H1 (cell line): ENCODE measurements at regions of chr17 and their contacts with region 1.

Region 1: DNA sequence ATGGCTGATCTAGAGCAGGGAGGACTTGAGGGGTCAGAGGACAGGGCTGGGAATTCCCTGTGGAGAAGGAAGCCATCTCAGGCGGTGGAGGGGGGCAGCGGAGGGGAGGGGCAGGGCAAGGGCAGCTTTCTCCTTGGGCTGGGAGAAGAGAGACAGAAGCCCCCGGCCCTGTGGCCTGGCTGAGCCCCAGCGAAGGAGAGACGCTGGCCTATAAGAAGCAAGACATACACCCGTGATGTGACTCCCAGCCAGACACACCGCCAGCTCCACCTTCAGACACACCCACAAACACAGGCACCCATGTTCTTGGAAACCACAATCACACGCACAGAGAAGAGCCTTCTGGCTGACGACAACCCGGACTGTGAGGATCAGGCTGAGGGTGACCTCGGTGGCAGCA is 10.0 kb downstream of the TRPV3 start:
- DNase-seq: no peak
- H3K4me3 ChIP-seq: no peak overlapping the region
- H3K27ac ChIP-seq: no peak overlapping the region
- H3K4me1 ChIP-seq: peaks cover 0 to 2% (median 0%) of the 10 kb centered on the region in 4 experiments; a peak in 1 of 7 replicates
- H3K27me3 ChIP-seq: no peaks in the 10 kb centered on the region
- CTCF ChIP-seq: no peak
- EP300 ChIP-seq: no peak
- POLR2A ChIP-seq: no peak
- RAD21 ChIP-seq: no peak

Region 2: DNA sequence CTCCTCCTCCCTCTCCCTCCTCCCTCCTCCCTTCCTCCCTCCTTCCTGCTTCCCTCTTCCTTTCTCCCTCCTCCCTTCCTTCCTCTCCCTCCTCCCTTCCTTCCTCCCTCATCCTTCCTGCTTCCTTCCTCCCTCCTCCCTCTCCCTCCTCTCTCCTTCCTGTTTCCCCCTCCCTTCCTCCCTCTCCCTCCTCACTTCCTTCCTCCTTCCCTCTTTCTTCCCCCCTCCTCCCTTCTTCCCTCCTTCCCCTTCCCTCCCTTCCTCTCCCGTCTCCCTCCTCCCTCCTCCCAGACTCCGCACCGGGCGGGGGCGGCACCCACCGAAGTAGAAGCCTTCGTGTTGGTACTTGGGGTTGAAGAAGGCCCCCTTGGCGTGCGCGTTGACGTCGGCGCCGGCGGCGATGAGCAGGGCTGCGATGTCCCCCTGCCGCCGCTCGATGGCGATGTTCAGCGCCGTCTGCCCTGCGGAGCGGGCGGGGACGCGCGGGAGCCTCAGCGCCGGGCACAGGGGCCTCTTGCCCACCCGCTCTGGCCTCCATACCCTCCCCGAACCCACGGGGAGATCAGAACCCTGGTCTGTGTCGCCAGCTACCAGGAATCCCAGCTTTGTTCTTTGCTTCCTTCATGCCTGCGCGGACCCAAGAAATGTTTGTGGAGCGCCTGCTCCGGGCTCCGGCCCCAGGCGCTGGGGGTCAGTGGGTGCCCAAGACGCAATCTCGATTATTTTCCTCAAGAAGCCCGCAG is 12.2 kb before region 1 on chr17:
- CTCF ChIA-PET with region 1: interaction called, 11 read pairs
- POLR2A ChIA-PET with region 1: no interaction called
- DNase-seq: peak; percentile 70 to 90
- H3K4me3 ChIP-seq: peak overlapping the region; percentile 24 to 63 (median 54); a peak in 6 of 8 replicates
- H3K27ac ChIP-seq: no peak overlapping the region
- H3K4me1 ChIP-seq: peaks cover 0 to 10% (median 4%) of the 10 kb centered on the region in 4 experiments; a peak in 6 of 7 replicates
- H3K27me3 ChIP-seq: no peaks in the 10 kb centered on the region
- CTCF ChIP-seq: peak; percentile 75 to 92 (median 87)
- EP300 ChIP-seq: no peak; a peak in 1 of 3 replicates
- POLR2A ChIP-seq: peak in 1 of 2 experiments; percentile 49; a peak in 1 of 3 replicates
- RAD21 ChIP-seq: peak; percentile 66 to 78

Region 3: DNA sequence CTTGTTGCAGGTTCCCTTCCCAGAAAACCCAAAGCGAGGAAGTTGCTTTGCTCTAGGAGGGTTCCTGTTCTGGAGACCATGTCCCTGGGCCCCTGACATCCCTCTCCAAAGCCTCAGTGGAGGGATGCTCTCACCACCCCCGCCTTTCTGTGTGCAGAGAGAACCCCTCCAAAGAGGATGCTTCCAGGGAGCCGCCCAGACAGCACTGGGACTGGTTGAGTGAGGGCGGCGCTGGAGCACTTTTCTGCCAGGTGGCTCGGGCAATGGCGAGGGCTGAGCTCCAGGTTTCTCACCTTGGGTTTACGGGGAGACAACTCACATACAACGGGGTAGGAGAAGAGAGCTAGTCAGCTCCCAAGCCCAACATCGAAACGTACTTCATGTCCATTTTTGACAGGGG is 128.3 kb after region 1 on chr17:
- CTCF ChIA-PET with region 1: no interaction called
- POLR2A ChIA-PET with region 1: no interaction called
- DNase-seq: no peak
- H3K4me3 ChIP-seq: no peak overlapping the region
- H3K27ac ChIP-seq: no peak overlapping the region
- H3K4me1 ChIP-seq: peaks cover 0 to 2% (median 0%) of the 10 kb centered on the region in 4 experiments; a peak in 2 of 7 replicates
- H3K27me3 ChIP-seq: 0 out of 7 replicates have a peak, but pooled peaks cover 0 to 2% (median 0%) of the 10 kb centered on the region in 4 experiments
- CTCF ChIP-seq: no peak
- EP300 ChIP-seq: no peak
- POLR2A ChIP-seq: no peak
- RAD21 ChIP-seq: no peak